Gastrocnemius medialis (tissue), 4 donors: ENCODE measurements at regions of chr2 and their contacts with region 1.

Region 1: GRCh38 chr2:11863513-11864328 is 117.3 kb downstream of the LPIN1 start:
- DNase-seq: peak; percentile 59 to 73
- ATAC-seq: peak; percentile 67 to 90
- H3K4me3 ChIP-seq: peak overlapping the region in 1 of 4 donors; percentile 20
- H3K27ac ChIP-seq: peak overlapping the region in 3 of 4 donors; percentile 31 to 46 (median 39)
- H3K4me1 ChIP-seq: peaks cover 5 to 6% of the 10 kb centered on the region in 2 donors
- H3K27me3 ChIP-seq: no peaks in the 10 kb centered on the region
- CTCF ChIP-seq: peak; percentile 76 to 95 (median 90)
- POLR2A ChIP-seq: no peak

Region 2: GRCh38 chr2:12456293-12457151 is 592.8 kb after region 1 on chr2:
- in situ Hi-C with region 1: loop called in 1 of 4 experiments (anchors 25 kb)
- intact Hi-C with region 1: no loop called
- DNase-seq: peak; percentile 88 to 92
- ATAC-seq: peak; percentile 85 to 88
- H3K4me3 ChIP-seq: peak overlapping the region; percentile 18 to 26 (median 20)
- H3K27ac ChIP-seq: peak overlapping the region; percentile 60 to 82 (median 66)
- H3K4me1 ChIP-seq: peaks cover 18 to 32% of the 10 kb centered on the region in 2 donors
- H3K27me3 ChIP-seq: no peaks in the 10 kb centered on the region
- CTCF ChIP-seq: peak in 1 of 5 experiments; percentile 17
- POLR2A ChIP-seq: no peak

Region 3: GRCh38 chr2:12931186-12931844 is 1067.6 kb after region 1 on chr2:
- in situ Hi-C with region 1: no loop called
- intact Hi-C with region 1: loop called (anchors 10 kb)
- DNase-seq: no peak
- ATAC-seq: peak; percentile 66 to 76
- H3K4me3 ChIP-seq: no peak overlapping the region
- H3K27ac ChIP-seq: no peak overlapping the region
- H3K4me1 ChIP-seq: peaks cover 0 to 4% of the 10 kb centered on the region in 2 donors
- H3K27me3 ChIP-seq: no peaks in the 10 kb centered on the region
- CTCF ChIP-seq: peak; percentile 62 to 88 (median 73)
- POLR2A ChIP-seq: no peak

Region 4: DNA sequence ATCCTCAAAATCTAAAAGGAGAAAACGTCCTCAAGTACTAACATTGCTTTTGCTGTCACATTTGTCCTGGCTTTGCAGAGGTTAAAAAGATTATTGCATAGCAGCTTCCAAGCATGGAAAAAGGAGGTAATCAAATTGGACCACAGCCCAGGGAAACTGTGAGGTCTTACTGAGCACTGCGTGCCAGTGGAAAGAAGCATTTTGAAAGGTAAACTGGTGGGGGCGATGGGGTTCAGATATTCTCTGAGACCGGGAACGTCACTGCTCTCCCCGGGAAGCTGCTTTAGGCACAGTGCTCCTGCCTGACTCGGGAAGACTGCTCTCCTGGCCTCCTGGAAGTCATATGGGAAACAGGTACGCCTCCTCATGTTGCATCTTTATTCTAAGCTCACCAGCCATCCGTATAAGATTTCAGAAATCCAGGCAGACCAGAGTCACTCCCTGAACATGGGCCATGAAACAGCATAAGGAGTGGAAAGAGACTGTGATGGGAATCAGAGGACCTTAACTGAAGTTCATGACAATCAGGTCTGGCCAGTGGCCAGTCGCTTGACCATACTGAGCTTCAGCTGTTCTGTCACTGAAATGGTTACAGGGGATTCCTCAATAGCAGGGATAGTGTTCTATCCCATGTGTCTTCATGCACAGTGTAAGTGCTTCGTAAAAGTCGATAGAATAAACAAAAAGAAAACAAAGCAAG is 1137.1 kb after region 1 on chr2:
- in situ Hi-C with region 1: loop called in 3 of 4 experiments (anchors 10 kb)
- intact Hi-C with region 1: loop called (anchors 1 kb)
- DNase-seq: no peak
- ATAC-seq: peak; percentile 19 to 24
- H3K4me3 ChIP-seq: peak overlapping the region in 1 of 4 donors; percentile 25
- H3K27ac ChIP-seq: peak overlapping the region in 1 of 4 donors; percentile 25
- H3K4me1 ChIP-seq: peaks cover 13% of the 10 kb centered on the region in 2 donors
- H3K27me3 ChIP-seq: no peaks in the 10 kb centered on the region
- CTCF ChIP-seq: no peak
- POLR2A ChIP-seq: no peak

Region 5: GRCh38 chr2:13006829-13007717 is 1143.4 kb after region 1 on chr2:
- in situ Hi-C with region 1: loop called in 3 of 4 experiments (anchors 10 kb)
- intact Hi-C with region 1: loop called (anchors 1 kb)
- DNase-seq: peak; percentile 13 to 21
- ATAC-seq: peak; percentile 71 to 80
- H3K4me3 ChIP-seq: peak overlapping the region in 2 of 4 donors; percentile 19 to 27
- H3K27ac ChIP-seq: peak overlapping the region in 3 of 4 donors; percentile 11 to 38 (median 17)
- H3K4me1 ChIP-seq: peaks cover 0 to 4% of the 10 kb centered on the region in 2 donors
- H3K27me3 ChIP-seq: no peaks in the 10 kb centered on the region
- CTCF ChIP-seq: peak; percentile 62 to 91 (median 72)
- POLR2A ChIP-seq: no peak